Right ventricle myocardium superior (tissue), 1 donor: ENCODE measurements at regions of chr5 and their contacts with region 1.

Region 1: GRCh38 chr5:142548739-142549275 is 137.1 kb downstream of the FGF1 start:
- DNase-seq: no peak
- ATAC-seq: peak; percentile 85

Region 2: DNA sequence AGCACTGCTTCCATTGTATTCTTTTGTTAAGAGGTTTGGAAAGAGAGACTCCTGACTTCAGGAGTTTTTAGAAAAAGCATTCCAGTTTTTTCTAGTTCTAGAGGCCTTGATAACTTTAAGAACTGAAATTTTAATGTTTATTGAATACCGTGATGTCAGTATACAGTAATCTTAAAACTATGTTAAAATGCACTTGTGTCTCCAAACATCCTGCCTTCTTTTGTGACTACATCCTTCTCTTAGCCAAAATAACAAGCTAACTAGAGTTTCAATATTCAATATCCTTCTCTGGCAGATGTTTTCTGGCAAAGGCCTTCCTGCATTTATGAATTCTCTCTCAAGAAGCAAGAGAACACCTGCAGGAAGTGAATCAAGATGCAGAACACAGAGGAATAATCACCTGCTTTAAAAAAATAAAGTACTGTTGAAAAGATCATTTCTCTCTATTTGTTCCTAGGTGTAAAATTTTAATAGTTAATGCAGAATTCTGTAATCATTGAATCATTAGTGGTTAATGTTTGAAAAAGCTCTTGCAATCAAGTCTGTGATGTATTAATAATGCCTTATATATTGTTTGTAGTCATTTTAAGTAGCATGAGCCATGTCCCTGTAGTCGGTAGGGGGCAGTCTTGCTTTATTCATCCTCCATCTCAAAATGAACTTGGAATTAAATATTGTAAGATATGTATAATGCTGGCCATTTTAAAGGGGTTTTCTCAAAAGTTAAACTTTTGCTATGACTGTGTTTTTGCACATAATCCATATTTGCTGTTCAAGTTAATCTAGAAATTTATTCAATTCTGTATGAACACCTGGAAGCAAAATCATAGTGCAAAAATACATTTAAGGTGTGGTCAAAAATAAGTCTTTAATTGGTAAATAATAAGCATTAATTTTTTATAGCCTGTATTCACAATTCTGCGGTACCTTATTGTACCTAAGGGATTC is 397.1 kb before region 1 on chr5:
- intact Hi-C with region 1: loop called (anchors 5 kb)
- DNase-seq: no peak
- ATAC-seq: peak; percentile 77

Region 3: DNA sequence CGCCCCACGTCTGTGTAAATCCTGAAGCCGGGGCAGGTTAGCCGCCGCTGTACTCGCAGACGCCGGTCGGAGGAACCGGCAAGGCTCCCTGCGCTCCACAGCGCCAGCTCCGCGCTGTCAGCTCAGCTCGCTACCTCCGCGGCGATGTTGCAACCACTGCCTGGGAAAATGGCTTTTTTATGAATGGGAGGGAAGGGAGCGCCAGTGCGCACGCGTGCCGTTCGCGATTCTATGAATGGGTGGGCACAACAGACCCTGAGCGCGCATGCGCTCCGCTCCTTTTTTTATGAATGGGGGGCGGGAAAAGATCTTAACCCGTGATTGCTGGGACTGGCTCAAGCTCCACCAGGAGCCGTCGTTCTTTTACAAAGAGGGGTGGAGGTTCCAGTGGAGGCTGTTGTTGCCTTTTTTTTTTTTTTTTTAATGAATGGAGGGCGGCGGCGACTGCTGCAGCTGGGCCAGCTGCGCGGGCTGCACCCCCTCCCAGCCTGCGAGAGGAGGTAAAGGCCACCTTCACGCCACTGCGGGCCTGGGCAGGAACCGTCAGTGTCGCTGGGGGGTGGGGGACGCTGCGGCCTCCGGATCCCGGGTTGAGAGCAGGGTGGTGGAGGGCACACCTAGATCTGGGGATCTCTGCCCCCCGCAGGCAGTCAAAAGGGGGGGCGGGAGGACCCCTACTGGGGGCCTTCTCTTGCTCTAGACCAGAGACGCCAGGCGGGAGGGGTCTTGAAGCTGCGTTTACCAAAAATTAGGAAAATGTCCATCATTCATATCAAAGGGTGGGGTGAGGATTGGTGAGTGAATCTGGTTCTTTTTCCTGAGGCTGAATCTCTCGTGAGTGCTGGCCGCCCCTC is 223.7 kb before region 1 on chr5 and contains the start of gene SPRY4:
- intact Hi-C with region 1: loop called (anchors 5 kb)
- DNase-seq: peak; percentile 95
- ATAC-seq: peak; percentile 84
- total RNA-seq, gene SPRY4: 9.7 TPM

Region 4: GRCh38 chr5:142356716-142357473 is 191.9 kb before region 1 on chr5:
- intact Hi-C with region 1: loop called (anchors 5 kb)
- DNase-seq: peak; percentile 93
- ATAC-seq: peak; percentile 88

Region 5: GRCh38 chr5:142408981-142409481 is 139.8 kb before region 1 on chr5:
- intact Hi-C with region 1: no loop called
- DNase-seq: no peak
- ATAC-seq: no peak

Region 6: GRCh38 chr5:142432369-142432863 is 116.4 kb before region 1 on chr5:
- intact Hi-C with region 1: loop called (anchors 10 kb)
- DNase-seq: no peak
- ATAC-seq: peak; percentile 41